PC-9 (cell line): ENCODE measurements at regions of chr2 and their contacts with region 1.

Region 1: GRCh38 chr2:95277246-95277906 is 3.1 kb downstream of the PROM2 start:
- DNase-seq: peak; percentile 80 to 90
- H3K4me3 ChIP-seq: peak overlapping the region; percentile 73
- H3K27ac ChIP-seq: peak overlapping the region; percentile 65
- H3K4me1 ChIP-seq: peaks cover 39% of the 10 kb centered on the region
- H3K27me3 ChIP-seq: no peaks in the 10 kb centered on the region
- CTCF ChIP-seq: peak; percentile 76

Region 2: GRCh38 chr2:94879416-94879945 is 397.9 kb before region 1 on chr2:
- CTCF ChIA-PET with region 1: no interaction called
- POLR2A ChIA-PET with region 1: no interaction called
- intact Hi-C with region 1: no loop called
- DNase-seq: no peak
- H3K4me3 ChIP-seq: no peak overlapping the region
- H3K27ac ChIP-seq: no peak overlapping the region
- H3K4me1 ChIP-seq: no peaks in the 10 kb centered on the region
- H3K27me3 ChIP-seq: peaks cover 12% of the 10 kb centered on the region; the same call in 1 of the 2 replicates
- CTCF ChIP-seq: no peak

Region 3: DNA sequence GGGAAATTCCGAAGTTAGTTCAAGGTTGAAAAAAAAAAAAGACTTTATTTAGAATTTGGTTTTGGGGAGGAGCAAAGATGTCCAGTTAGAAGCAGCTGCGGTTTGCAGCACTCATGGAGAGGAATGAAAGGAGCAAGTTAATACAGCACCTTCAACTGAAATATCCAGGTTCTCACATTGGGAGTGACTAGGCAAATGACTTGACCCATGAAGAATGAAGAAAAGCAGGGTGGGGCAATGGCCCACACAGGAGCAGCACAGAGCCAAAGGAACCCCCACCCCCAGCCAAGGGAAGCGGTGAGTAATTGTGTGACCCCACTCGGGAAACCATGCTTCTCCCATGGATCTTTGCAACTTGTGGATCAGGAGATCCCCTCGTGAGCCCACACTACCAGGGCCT is 37.3 kb before region 1 on chr2:
- CTCF ChIA-PET with region 1: interaction called, 3 read pairs
- POLR2A ChIA-PET with region 1: interaction called, 3 read pairs
- intact Hi-C with region 1: loop called (anchors 2 kb)
- DNase-seq: peak; percentile 45 to 56
- H3K4me3 ChIP-seq: no peak overlapping the region
- H3K27ac ChIP-seq: no peak overlapping the region
- H3K4me1 ChIP-seq: no peaks in the 10 kb centered on the region
- H3K27me3 ChIP-seq: no peaks in the 10 kb centered on the region
- CTCF ChIP-seq: no peak

Region 4: GRCh38 chr2:95259765-95260417 is 17.5 kb before region 1 on chr2:
- CTCF ChIA-PET with region 1: no interaction called
- POLR2A ChIA-PET with region 1: no interaction called
- intact Hi-C with region 1: no loop called
- DNase-seq: peak; percentile 30 to 74
- H3K4me3 ChIP-seq: no peak overlapping the region
- H3K27ac ChIP-seq: no peak overlapping the region
- H3K4me1 ChIP-seq: peaks cover 7% of the 10 kb centered on the region; the same call in 1 of the 2 replicates
- H3K27me3 ChIP-seq: peaks cover 29% of the 10 kb centered on the region; the same call in 1 of the 2 replicates
- CTCF ChIP-seq: no peak

Region 5: GRCh38 chr2:95296880-95297487 is 19.6 kb after region 1 on chr2 and contains the start of gene KCNIP3:
- CTCF ChIA-PET with region 1: interaction called, 13 read pairs
- POLR2A ChIA-PET with region 1: interaction called, 13 read pairs
- intact Hi-C with region 1: loop called (anchors 2 kb)
- DNase-seq: no peak
- H3K4me3 ChIP-seq: no peak within 1 kb of the TSS
- H3K27ac ChIP-seq: no peak within 1 kb of the TSS
- H3K4me1 ChIP-seq: peaks cover 34% of the 10 kb centered on the region
- H3K27me3 ChIP-seq: peaks cover 3% of the 10 kb centered on the region; the same call in 1 of the 2 replicates
- CTCF ChIP-seq: no peak
- total RNA-seq, gene KCNIP3: 3.5 and 4.5 TPM in 2 replicates

Region 6: DNA sequence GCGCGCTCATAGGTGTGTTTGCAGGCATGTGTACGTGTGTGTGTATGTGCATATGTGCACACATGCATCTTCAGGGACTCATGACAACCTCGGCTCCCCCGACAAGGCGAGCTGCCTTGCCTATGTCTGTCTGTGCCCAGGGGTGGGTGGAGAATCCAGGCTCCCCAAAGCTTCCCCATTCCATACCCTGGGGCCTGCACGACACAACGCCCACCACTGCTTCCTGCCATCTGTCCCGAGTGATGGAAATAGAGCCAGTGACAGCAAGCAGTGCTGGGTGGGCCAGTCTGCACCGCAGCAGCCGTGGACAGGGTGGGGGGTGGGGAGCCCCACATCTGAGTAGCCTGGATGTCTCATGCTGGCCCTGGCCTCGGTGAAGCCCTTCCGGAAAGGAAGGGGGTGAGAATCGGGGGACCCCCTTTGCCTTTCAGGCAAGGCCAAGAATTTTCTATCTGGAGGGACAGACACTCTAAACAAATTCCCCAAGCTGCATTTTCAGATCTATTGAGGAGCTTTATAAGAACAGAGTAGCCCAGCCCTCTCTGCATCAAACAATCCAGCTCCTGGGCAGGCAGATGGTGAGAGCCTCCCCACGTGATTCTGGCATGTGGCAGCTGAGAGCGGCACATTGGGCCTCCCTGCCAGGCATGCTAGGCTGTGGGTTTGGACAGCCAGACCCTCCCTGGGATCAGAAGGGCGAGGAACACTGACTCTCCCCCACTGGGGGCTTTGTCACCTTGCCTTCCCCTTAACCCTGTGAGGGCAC is 24.7 kb after region 1 on chr2:
- CTCF ChIA-PET with region 1: interaction called, 13 read pairs
- POLR2A ChIA-PET with region 1: interaction called, 5 read pairs
- intact Hi-C with region 1: no loop called
- DNase-seq: no peak
- H3K4me3 ChIP-seq: no peak overlapping the region
- H3K27ac ChIP-seq: no peak overlapping the region
- H3K4me1 ChIP-seq: peaks cover 16% of the 10 kb centered on the region
- H3K27me3 ChIP-seq: no peaks in the 10 kb centered on the region
- CTCF ChIP-seq: no peak

Region 7: DNA sequence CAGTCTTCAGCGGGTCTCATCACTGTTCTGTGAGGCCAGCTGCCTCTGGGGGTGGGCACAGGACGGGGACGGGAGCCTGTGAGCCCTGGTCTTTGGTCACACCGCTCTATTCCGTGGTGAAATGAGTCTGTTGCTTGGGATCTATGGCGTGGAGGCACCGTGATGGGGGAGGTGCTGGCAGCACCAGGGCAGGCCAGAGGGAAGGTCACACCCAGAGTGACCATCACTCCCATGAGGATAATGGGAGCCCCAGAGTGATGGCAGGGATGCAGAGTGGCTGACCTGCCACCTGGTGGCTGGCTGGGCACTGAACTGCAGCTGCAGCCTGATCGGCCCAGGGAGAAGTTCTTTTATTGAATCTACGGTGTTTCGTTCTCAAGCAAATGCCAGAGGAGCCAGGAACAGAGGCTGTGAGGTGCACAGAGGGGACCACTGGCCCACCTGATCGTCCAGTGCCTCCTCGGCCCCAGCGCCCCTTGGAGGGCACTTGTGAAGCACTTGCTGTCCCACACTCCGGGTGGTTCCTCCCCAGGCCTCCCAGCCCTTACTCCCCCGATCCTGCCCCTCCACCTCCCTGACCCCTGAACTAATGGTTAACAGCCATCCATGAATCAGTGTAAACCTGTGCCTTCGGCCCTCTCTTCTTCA is 37.7 kb after region 1 on chr2:
- CTCF ChIA-PET with region 1: no interaction called
- POLR2A ChIA-PET with region 1: no interaction called
- intact Hi-C with region 1: loop called (anchors 1 kb)
- DNase-seq: peak; percentile 70
- H3K4me3 ChIP-seq: no peak overlapping the region
- H3K27ac ChIP-seq: peak overlapping the region; percentile 88
- H3K4me1 ChIP-seq: peaks cover 78% of the 10 kb centered on the region
- H3K27me3 ChIP-seq: no peaks in the 10 kb centered on the region
- CTCF ChIP-seq: peak; percentile 94